Dendritic cell treated with granulocyte-macrophage colony-stimulating factor and Interleukin-4, amounts not matched to agents 40 ng/mL and 50 ng/mL, for 4 days (primary cell): ENCODE measurements at regions of chr9 and their contacts with region 1.

Region 1: DNA sequence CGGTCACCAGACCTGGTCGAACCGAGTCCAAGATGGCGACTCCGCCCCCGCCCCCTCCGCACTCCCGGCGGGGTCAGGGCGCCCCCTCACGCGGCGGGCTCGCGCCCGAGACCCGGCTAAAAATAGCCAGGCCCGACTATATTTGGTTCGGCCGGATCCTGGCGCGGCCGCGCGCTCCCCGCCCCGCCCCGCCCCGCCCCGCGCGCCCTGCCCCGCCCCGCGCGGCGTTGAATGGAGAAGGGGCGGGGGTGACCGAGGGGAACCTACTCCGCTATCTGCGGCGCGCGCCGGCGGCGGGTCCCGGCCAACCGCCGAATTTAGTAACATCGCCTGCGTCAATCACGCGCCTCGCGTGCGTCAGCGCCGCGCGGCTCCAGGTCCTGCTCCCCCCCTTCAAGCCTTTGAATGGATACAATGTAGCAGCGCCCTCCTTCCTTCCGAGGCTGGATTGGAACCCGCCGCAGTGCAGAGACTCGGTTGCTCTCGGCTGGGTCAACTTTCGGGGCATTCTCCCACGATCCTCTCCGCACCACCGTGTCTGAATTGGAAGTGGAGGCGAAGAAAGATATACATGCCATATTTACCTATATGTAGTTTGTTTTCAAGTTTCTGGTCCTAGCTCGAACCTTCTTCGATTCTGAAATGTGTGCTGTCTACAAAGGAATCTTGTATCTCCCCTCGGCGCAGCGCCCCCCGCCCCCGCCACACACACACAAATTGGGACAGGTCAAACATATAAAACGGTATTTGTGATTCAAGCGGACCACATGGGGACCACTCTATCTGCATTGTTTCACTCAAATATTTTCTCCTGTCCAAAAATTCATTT is 1.6 kb upstream of the NR4A3 start:
- H3K4me3 Mint-ChIP-seq: peak overlapping the region; percentile 92
- H3K27ac Mint-ChIP-seq: peak overlapping the region; percentile 87
- H3K4me1 Mint-ChIP-seq: peaks cover 50% of the 10 kb centered on the region
- H3K27me3 Mint-ChIP-seq: peaks cover 35% of the 10 kb centered on the region

Region 2: DNA sequence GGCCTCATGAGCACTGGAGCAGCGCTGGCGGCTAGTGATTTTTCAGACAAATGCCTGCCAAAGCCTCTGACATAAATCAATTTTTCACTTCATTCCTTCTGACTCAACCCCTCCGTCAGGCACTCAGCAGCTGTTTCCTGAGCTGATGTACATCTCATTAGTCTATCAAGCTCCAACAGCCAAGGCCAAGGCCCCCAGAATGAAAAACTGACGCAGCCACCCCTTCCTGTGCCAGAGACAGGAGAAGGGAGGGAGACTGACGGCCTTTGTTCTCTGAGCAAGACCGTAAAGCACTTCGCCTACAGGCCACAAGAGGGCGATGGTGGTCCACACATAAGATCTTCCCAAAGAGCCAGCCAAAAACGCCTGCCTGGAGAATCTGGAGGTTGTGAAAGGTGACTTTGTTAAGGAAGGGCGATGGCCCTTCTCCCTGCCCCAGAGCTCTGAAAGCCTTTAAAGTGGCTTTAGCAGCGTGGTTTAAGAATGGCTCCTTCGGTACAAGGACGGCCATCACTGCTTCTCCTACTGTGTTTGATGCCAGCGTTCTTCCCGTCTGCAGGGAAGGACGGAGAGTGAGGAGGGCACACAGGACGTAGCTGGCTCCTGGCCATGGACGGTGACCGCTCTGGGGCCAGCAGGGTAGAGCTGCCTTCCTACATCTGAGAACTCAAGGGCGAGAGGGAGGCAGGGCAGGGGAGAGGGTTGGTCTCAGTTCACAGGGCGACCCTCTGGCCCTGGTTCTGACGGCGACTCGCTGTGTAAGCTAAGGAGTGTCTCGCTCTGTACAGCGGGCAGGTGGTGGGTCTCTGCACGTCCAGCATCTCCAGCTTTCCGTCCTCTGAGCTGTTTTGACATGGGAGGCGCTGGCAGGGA is 635.4 kb before region 1 on chr9:
- intact Hi-C with region 1: loop called (anchors 5 kb)
- H3K4me3 Mint-ChIP-seq: no peak overlapping the region
- H3K27ac Mint-ChIP-seq: peak overlapping the region; percentile 25
- H3K4me1 Mint-ChIP-seq: peaks cover 79% of the 10 kb centered on the region
- H3K27me3 Mint-ChIP-seq: no peaks in the 10 kb centered on the region

Region 3: GRCh38 chr9:99433555-99433954 is 386.5 kb before region 1 on chr9:
- intact Hi-C with region 1: loop called (anchors 10 kb)
- H3K4me3 Mint-ChIP-seq: no peak overlapping the region
- H3K27ac Mint-ChIP-seq: peak overlapping the region; percentile 83
- H3K4me1 Mint-ChIP-seq: peaks cover 47% of the 10 kb centered on the region
- H3K27me3 Mint-ChIP-seq: no peaks in the 10 kb centered on the region

Region 4: GRCh38 chr9:99595796-99596195 is 224.3 kb before region 1 on chr9:
- intact Hi-C with region 1: loop called (anchors 5 kb)
- H3K4me3 Mint-ChIP-seq: no peak overlapping the region
- H3K27ac Mint-ChIP-seq: peak overlapping the region; percentile 82
- H3K4me1 Mint-ChIP-seq: peaks cover 42% of the 10 kb centered on the region
- H3K27me3 Mint-ChIP-seq: no peaks in the 10 kb centered on the region

Region 5: DNA sequence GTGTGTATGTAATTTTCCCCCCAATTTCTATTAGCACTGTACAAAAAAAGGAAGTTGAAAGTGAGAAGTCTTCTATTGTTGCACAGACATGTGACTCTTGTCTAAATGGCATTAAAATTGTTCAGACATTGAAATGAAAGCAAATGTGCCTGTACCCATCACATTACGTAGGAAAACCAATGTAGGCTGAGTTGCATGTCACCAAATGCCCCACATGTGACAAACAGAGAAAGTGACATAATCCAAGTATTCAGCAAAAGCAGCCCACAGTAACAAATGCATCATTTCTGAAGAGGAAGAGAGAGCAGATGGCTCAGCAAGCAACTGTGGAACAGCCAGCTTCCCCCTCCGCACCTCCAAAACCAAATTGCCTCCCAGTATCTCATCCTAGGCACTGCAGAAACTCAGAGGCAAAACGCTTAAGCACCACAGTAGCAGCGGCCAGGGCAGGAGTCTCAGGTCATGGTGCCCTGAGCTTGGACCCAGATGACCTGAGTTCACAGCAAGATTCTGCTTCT is 159.8 kb before region 1 on chr9:
- intact Hi-C with region 1: loop called (anchors 2 kb)
- H3K4me3 Mint-ChIP-seq: peak overlapping the region; percentile 42
- H3K27ac Mint-ChIP-seq: peak overlapping the region; percentile 78
- H3K4me1 Mint-ChIP-seq: peaks cover 30% of the 10 kb centered on the region
- H3K27me3 Mint-ChIP-seq: no peaks in the 10 kb centered on the region

Region 6: DNA sequence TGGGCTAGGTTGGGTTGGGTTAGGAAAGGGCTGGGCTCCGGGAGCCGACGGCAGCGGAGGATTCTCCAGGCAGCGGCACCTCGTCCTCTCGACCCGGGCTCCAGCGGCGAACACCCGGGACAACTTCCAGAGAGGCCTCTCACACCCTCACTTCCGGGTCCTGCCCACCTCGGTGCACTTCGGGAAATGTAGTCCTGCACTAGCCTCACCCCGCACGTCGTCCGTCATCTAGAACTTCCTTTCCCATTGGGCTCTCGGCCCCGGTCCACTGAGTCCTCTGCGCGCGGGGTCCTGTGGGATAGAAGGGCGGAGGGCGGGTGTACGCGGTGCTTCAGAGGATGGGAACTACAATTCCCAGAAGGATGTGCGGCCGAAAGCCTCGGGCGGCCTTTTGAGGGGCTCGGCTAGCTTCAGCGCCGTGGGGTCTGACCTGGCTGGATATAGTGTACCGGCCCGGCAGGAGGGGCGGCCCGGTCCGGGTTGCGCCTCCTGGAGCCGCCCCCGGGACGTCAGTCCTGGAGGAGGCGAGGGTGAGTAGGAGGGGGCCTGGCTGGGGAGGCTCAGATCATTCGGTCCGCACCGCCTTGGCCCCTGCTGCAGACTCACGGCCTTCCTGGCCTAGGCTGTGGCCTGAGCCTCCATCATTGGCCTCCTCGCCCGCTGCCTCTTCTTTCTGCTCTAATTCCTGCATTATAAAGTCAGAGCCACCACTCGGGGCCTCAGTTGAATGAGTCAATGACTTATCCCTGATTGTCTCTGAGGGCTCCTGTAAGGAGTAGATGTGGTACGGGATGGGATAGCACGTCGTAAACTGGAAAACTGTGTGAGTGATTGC is 279.0 kb after region 1 on chr9 and contains the starts of genes ERP44 and INVS:
- intact Hi-C with region 1: loop called (anchors 10 kb)
- H3K4me3 Mint-ChIP-seq: peak within 1 kb of the TSS; percentile 100
- H3K27ac Mint-ChIP-seq: peak within 1 kb of the TSS; percentile 100
- H3K4me1 Mint-ChIP-seq: peaks cover 19% of the 10 kb centered on the region
- H3K27me3 Mint-ChIP-seq: no peaks in the 10 kb centered on the region